ENCODE measurements at regions of chr12 and their contacts with region 1.

Region 1: DNA sequence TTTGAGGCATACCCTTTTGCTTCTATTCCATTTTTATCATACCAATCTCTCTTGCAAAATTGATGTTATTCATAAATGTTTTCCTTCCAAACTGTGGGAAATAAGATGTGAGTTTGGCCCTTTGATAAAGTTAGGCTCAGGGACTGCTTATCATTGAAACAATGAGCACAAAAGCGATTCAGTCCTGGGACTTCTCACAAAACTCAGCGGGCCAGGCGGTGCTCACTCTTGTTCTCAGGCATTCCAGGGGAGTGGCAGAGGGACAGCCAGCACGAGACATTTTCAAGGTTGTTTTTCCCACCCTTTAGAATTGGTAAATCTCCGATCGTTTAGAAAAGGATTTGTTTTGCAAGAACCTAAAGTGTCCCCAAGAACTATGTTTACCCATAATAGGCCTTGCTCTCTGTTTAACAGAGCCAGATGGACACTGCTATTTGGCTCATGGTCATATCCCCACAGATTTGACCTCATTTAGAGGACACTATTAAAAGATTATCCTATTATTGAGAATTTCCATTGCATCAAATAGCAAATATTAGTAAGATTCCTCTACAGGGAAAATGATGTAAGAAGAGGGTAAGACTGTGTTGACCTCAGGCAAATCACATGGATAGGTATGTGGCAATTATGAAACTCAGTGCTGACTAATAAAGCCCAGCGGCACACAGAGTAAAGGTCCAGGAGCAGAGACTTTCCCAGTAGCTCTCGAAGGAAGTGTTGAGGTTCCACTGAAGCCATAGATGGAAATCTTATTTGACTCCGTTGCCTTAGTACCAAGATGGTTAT is 102.7 kb upstream of the USP44 start:
- DNase-seq: peak; percentile 51
- H3K4me3 Mint-ChIP-seq: peak overlapping the region; percentile 10
- H3K27ac Mint-ChIP-seq: peak overlapping the region; percentile 91
- H3K4me1 Mint-ChIP-seq: peaks cover 42% of the 10 kb centered on the region
- H3K27me3 Mint-ChIP-seq: no peaks in the 10 kb centered on the region
- CTCF ChIP-seq: no peak

Region 2: GRCh38 chr12:95532851-95533250 is 121.1 kb before region 1 on chr12:
- CTCF ChIA-PET with region 1: no interaction called
- intact Hi-C with region 1: no loop called
- DNase-seq: no peak
- H3K4me3 Mint-ChIP-seq: no peak overlapping the region
- H3K27ac Mint-ChIP-seq: no peak overlapping the region
- H3K4me1 Mint-ChIP-seq: peaks cover 9% of the 10 kb centered on the region
- H3K27me3 Mint-ChIP-seq: no peaks in the 10 kb centered on the region
- CTCF ChIP-seq: no peak

Region 3: GRCh38 chr12:95623585-95624042 is 30.3 kb before region 1 on chr12:
- CTCF ChIA-PET with region 1: interaction called, 3 read pairs
- intact Hi-C with region 1: loop called (anchors 1 kb)
- DNase-seq: peak; percentile 78
- H3K4me3 Mint-ChIP-seq: no peak overlapping the region
- H3K27ac Mint-ChIP-seq: peak overlapping the region; percentile 96
- H3K4me1 Mint-ChIP-seq: peaks cover 40% of the 10 kb centered on the region
- H3K27me3 Mint-ChIP-seq: no peaks in the 10 kb centered on the region
- CTCF ChIP-seq: peak; percentile 50

Region 4: DNA sequence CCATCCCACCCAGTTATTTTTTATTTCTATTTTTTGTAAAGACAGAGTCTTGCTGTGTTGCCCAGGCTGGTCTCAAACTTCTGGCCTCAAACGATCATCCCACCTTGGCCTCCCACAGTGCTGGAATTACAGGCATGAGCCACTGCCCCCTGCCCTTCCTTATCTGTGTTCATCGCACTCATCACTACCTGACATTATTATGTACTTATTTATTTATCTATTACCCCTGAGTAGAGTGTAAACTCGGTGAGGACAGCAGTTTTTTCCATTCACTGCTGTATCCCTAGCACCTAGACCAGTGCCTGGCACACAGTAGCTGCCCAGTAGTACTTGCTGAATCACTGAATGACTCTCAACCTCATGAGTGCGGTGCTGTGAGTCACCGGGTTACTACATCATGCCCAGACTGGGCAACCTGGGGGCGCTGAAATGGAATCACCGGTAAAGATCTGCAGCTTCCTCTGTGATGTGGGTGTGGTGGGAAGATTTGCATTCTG is 20.9 kb before region 1 on chr12:
- CTCF ChIA-PET with region 1: interaction called, 22 read pairs
- intact Hi-C with region 1: loop called (anchors 1 kb)
- DNase-seq: peak; percentile 90
- H3K4me3 Mint-ChIP-seq: peak overlapping the region; percentile 42
- H3K27ac Mint-ChIP-seq: peak overlapping the region; percentile 98
- H3K4me1 Mint-ChIP-seq: peaks cover 59% of the 10 kb centered on the region
- H3K27me3 Mint-ChIP-seq: no peaks in the 10 kb centered on the region
- CTCF ChIP-seq: no peak

Region 5: DNA sequence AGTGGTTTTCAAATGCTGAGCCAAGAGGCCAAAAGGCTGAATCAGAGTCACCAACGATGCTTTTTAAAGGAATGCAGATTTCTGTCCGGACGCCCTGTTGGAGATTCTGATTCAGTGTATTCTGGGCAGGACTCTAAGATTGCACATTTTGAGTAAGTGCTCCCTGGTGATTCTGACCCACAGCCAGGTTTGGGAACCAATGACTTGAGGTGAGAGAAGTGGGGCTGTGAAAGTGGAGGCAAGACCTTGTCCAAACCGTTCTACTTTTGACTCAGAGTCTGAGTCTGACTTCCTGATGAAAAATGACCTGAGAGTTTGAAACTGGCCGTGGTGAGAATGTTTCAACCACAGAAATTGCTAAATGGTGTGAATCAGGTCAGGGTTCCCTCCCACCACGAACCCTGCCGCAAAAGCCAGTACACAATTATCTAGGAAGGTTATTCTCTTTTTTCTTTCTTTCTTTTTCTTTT is 46.4 kb after region 1 on chr12:
- CTCF ChIA-PET with region 1: no interaction called
- intact Hi-C with region 1: loop called (anchors 5 kb)
- DNase-seq: no peak
- H3K4me3 Mint-ChIP-seq: no peak overlapping the region
- H3K27ac Mint-ChIP-seq: peak overlapping the region; percentile 77
- H3K4me1 Mint-ChIP-seq: peaks cover 27% of the 10 kb centered on the region
- H3K27me3 Mint-ChIP-seq: no peaks in the 10 kb centered on the region
- CTCF ChIP-seq: no peak

Measured in Calu3 (cell line).